ENCODE measurements at regions of chr22 and their contacts with region 1.

Region 1: DNA sequence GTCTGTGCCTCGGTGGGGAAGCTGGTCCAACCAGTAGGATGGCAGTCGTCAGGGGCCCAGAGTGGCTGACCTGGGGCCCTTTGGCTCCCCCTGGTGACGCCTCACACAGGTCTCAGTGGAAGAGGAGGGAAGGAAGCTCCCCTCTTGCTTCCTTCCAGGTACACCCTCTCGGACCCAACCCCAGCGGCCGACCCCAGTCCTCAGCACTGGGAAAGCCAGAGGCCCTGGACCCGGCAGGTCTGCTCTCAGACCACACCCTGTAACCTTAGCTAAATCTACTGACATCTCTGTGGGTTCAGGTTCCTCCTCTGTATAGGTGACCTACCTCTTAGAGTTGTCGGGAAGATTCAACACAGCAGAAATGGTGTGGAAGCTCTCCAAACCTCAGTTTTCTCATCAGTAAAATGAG is 3.4 kb upstream of the SCUBE1 start:
- DNase-seq: no peak
- H3K4me3 ChIP-seq: no peak overlapping the region
- H3K27ac ChIP-seq: no peak overlapping the region
- H3K4me1 ChIP-seq: peaks cover 16 to 44% (median 38%) of the 10 kb centered on the region in 4 donors
- H3K27me3 ChIP-seq: peaks cover 0 to 61% (median 21%) of the 10 kb centered on the region in 4 donors
- CTCF ChIP-seq: peak; percentile 69 to 81 (median 78)
- EP300 ChIP-seq: no peak
- POLR2A ChIP-seq: no peak

Region 2: GRCh38 chr22:43213051-43213450 is 133.5 kb before region 1 on chr22:
- intact Hi-C with region 1: no loop called
- DNase-seq: no peak
- H3K4me3 ChIP-seq: no peak overlapping the region
- H3K27ac ChIP-seq: no peak overlapping the region
- H3K4me1 ChIP-seq: peaks cover 0 to 5% (median 0%) of the 10 kb centered on the region in 4 donors
- H3K27me3 ChIP-seq: peaks cover 0 to 15% (median 0%) of the 10 kb centered on the region in 4 donors
- CTCF ChIP-seq: no peak
- EP300 ChIP-seq: no peak
- POLR2A ChIP-seq: no peak

Region 3: GRCh38 chr22:43273902-43274484 is 72.5 kb before region 1 on chr22:
- intact Hi-C with region 1: loop called (anchors 1 kb)
- DNase-seq: no peak
- H3K4me3 ChIP-seq: no peak overlapping the region
- H3K27ac ChIP-seq: no peak overlapping the region
- H3K4me1 ChIP-seq: peaks cover 0 to 26% (median 6%) of the 10 kb centered on the region in 4 donors
- H3K27me3 ChIP-seq: peaks cover 0 to 20% (median 0%) of the 10 kb centered on the region in 4 donors
- CTCF ChIP-seq: peak; percentile 61 to 82 (median 80)
- EP300 ChIP-seq: no peak
- POLR2A ChIP-seq: no peak

Region 4: DNA sequence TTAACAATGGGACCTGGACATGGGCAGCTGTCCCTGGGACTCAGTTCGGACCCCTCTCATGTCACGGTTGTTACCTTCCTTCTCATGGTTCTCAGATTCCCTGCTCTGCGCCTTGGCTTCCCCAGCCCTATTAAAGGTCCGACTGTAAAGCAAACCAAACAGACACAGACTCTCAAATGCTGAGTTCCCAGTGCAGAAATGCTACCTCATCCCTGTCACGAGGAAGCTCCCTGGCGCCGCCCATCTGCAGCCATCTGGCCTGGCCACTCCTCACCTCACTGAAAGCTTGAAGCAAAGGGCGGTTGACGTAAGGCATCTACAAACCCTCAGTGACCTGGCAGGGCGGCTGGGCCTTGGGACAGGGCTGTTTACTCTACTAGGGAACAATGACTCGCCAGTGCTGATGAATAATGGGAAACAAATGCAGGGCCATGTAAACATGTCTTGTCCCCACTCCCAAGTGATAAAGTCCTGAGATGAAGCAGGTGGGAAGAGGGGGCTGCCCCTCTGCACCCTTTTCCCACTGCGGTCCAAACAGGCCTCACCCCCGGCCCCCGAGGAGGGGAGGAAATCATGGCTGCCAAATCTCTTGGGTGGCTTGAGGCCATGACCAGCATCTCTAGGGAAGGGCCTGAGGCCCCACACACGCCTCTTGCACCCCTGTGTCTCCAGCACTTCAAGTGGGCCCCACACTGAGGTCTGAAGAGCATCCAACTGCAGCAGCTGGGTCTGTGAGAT is 52.7 kb before region 1 on chr22:
- intact Hi-C with region 1: loop called (anchors 5 kb)
- DNase-seq: peak; percentile 96
- H3K4me3 ChIP-seq: no peak overlapping the region
- H3K27ac ChIP-seq: peak overlapping the region; percentile 82 to 89 (median 86)
- H3K4me1 ChIP-seq: peaks cover 57 to 100% (median 98%) of the 10 kb centered on the region in 4 donors
- H3K27me3 ChIP-seq: no peaks in the 10 kb centered on the region
- CTCF ChIP-seq: peak in 1 of 3 experiments; percentile 19
- EP300 ChIP-seq: peak; percentile 96
- POLR2A ChIP-seq: no peak

Measured in esophagus muscularis mucosa (tissue), 4 donors.